ENCODE measurements at regions of chr2 and their contacts with region 1.

Region 1: DNA sequence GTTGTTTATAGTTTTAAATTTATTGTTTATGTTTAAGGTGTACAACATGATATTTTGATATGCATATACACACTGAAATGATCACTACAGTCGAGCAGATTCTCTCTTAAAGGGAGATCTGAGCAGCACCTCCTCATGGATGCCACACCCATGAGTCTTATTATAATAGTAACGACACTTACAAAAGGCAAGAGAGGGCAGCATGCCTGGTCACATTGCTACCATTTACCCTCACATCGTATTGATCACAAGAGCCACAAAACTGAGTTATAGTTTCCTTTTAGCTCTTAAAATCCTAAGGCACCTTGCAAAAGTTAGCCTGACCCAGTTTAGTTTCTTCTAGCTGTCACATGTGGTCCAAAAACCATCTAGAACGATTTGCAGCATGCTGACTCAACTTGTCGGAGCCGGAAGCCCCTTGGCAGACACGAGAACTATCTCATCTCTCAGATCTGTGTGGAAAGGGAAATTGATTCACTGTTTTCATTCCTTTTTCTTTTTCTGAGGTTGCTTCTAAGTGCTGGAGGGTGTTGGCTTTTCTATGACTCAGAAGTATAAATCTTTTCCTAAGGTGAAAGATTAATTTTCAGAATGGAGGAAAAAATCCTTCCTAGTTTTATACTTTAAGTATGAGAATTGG is 85.3 kb downstream of the CDC42EP3 start:
- DNase-seq: peak; percentile 85
- H3K4me3 Mint-ChIP-seq: peak overlapping the region; percentile 25
- H3K27ac Mint-ChIP-seq: peak overlapping the region; percentile 67
- H3K4me1 Mint-ChIP-seq: peaks cover 76% of the 10 kb centered on the region
- H3K27me3 Mint-ChIP-seq: no peaks in the 10 kb centered on the region

Region 2: DNA sequence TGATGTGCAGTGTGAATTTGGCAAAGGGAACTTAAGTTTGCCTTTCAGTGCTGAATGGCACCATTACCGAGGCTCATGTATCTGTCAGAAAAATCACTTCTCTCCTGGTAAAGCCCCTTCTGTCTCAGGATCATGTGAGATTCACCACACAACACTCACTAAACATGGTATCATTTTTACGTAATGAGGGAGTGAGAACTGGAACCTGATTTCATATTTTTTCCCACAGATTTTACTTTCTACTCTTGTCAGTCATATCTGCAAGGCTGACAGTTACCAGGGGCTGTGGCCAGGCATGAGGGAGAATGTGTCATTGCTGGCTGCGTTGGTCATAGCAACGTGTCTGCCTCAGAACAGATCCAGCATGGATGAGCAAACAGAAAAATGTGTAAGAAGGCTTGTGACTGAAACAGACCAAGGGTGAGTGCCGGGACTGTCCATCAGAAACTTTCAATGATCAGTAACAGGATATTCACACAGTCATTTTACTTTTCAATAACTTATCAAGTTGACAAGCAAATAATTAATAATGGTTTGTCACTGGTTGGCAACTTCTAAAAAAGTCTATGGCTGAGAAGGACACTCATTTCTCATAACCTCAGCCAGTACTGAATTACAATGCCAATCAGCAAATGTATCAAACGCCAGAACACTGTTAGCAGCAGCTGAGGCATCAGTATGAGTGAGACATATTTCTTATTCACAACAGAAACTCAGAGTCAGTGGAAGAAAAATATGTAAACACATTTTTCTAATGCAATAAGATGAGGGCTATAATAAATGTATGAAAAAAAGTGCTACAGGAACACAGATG is 15.1 kb before region 1 on chr2:
- CTCF ChIA-PET with region 1: interaction called, 3 read pairs
- intact Hi-C with region 1: loop called (anchors 1 kb)
- DNase-seq: peak; percentile 60
- H3K4me3 Mint-ChIP-seq: no peak overlapping the region
- H3K27ac Mint-ChIP-seq: no peak overlapping the region
- H3K4me1 Mint-ChIP-seq: peaks cover 13% of the 10 kb centered on the region
- H3K27me3 Mint-ChIP-seq: no peaks in the 10 kb centered on the region

Region 3: GRCh38 chr2:37672104-37672869 is 86.2 kb after region 1 on chr2:
- CTCF ChIA-PET with region 1: no interaction called
- intact Hi-C with region 1: loop called (anchors 1 kb)
- DNase-seq: peak; percentile 71
- H3K4me3 Mint-ChIP-seq: peak overlapping the region; percentile 75
- H3K27ac Mint-ChIP-seq: peak overlapping the region; percentile 63
- H3K4me1 Mint-ChIP-seq: peaks cover 40% of the 10 kb centered on the region
- H3K27me3 Mint-ChIP-seq: no peaks in the 10 kb centered on the region

Region 4: DNA sequence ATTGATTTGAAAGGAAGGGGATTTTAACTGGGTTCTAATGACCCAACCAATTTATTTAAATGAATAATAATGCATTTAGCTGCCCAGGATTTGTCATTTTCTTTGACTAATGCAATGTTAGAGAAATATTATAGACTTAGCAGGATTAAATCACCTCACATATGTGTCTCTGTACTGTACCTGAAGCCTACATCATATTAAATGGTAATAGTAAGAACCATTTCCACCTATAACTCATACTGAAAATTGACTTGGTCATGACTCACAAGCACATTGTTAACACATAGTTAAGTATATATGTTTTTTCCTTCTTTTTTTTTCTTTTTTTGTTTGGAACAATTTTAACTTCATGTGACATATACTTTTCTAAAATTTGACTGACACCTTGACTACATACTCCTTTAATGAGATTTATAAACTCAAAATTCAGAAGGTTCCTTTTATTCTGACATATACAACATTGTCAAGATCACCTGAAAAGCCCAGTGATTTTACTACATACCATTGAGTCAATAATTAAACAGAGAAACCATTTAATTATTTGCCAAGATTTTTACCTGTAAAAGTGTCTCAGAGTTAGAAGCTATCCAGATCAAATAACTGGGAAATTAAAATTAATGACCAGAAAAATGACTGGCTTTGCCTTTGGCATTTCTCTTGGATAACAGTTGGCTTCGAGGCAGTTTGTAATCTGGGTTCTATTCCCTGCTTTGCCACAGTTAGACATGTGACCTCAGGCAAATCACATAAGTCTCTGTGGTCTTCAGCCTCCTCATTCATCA is 144.1 kb after region 1 on chr2:
- CTCF ChIA-PET with region 1: no interaction called
- intact Hi-C with region 1: loop called (anchors 5 kb)
- DNase-seq: no peak
- H3K4me3 Mint-ChIP-seq: no peak overlapping the region
- H3K27ac Mint-ChIP-seq: no peak overlapping the region
- H3K4me1 Mint-ChIP-seq: peaks cover 6% of the 10 kb centered on the region
- H3K27me3 Mint-ChIP-seq: peaks cover 1% of the 10 kb centered on the region

Region 5: DNA sequence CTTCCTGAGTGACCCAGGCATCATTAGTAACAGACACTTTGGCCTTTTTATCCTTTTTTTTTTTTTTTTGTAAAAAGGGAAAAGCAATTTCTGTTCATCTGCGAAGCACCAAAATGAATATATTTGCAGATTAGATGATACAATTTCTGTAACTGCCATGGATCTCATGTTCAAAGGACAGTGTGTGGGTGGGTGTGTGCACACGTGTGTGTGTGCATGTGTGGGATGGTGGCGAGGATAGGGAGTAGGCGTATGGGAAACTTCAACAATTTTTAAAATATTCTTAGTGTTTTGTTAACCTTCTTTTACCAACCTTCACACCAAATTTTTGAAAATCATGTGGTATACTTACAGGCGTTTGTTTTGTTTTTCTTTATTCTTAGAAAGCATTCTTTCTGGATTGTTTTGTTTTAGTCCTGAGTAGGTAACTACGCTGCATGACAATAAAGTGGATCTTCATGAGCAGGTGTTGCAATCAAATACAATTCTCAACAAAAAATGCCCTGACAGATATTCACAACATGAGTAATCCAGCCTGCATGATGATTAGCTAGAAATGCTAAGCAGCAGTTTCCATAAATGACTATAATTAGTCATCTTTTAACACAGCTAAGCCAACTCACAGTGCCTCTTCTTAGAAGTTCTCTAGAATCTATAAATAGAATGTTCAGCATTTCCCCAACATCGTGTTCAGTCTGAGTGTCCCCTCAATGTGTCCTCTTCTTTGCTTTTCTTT is 285.5 kb after region 1 on chr2:
- CTCF ChIA-PET with region 1: no interaction called
- intact Hi-C with region 1: loop called (anchors 1 kb)
- DNase-seq: no peak
- H3K4me3 Mint-ChIP-seq: peak overlapping the region; percentile 25
- H3K27ac Mint-ChIP-seq: peak overlapping the region; percentile 86
- H3K4me1 Mint-ChIP-seq: peaks cover 30% of the 10 kb centered on the region
- H3K27me3 Mint-ChIP-seq: peaks cover 12% of the 10 kb centered on the region

Measured in activated naive CD4-positive, alpha-beta T cell treated with anti-CD3 and anti-CD28 coated beads for 36 hours (primary cell).